ENCODE measurements at regions of chr15 and their contacts with region 1.

Region 1: DNA sequence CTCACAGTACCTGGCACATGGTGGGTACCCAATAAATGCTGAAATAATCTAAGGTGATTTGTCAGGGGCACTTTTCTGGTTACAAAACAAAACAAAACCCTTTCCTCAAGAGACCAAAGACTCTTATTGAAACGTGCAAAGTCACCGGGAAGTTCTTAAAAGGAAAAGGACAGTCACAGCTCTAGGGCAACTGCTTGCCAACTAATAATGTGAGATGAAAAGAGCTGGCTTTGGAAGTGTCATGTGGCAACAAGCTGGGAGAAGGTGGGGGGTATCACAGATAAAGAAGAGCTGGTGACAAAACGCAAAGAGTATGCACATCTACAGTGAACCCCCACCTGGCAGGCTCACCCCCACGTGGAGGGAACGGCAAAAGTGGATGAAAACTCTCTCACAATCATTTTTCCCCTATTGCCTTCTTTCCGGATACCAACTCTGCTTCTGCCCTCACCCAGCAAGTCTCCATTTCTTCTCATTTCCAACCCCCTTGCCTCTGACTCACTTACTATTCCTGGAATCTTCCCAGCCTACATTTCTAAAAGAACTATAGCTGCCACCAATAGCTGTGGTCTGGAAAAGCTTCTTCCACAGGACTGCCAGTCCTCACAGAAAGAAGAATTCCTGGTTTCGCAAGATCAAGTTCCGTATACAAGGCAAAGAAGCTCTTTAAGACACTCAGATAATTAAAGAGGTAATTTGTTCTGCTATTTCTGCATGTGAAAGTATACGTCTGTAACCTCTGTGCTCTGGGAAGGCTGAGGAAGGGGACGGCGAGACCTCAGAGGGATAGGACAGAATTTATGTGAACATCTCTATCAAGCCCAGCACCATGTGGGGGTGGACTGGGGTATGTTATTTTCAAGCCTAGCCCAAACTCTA is 21.8 kb upstream of the ANPEP start:
- DNase-seq: peak; percentile 86
- H3K4me3 ChIP-seq: peak overlapping the region; percentile 20
- H3K27ac ChIP-seq: peak overlapping the region; percentile 86
- H3K27me3 ChIP-seq: no peaks in the 10 kb centered on the region
- CTCF ChIP-seq: no peak

Region 2: DNA sequence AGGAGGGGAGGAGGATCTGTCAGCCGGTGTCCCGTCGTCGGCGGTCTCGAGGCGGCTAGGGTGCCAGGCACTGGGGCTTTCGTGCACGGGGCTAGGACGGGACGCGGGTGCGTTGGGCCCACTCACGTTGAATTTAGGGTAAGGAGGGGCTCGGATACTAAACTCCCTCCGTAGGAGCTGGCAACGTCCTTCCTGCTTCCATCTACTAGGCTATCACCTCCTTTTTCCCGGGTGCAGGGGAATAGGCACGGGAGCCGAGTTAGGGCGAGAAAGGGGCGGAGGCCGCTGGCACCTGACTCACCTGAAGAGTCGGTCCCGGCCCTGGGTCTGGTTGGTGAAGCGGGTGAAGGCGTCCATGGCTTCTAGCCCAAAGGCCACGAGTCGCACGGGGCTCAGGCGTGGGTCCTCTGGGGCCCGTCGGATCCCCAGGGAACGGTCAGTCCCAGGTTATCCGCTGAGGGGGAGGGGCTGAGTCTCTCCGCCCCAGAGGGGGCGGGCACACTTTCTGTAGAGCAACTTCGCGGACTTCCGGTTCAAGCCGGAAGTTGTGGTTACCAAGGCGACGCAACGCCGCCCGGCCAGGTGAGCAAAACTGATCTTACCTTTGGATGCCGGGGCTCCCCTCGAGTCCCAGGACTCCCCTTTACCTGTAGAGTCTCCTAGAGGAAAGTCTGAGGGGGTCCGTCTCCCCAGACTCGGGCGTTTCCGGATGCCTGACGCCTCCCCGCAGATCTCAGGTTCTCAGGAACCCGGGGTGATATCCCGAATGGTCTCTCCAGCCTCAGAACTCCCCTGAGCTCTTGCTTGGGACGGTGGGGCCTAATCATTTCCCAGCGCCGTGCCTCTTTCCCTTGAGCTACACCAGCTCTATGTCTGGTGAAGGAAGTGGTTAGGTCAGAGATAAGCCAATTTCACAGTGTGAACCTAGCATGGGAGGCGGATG is 145.9 kb before region 1 on chr15 and contains the starts of genes PEX11A and WDR93:
- in situ Hi-C with region 1: no loop called
- DNase-seq: peak; percentile 49
- H3K4me3 ChIP-seq: peak within 1 kb of the TSS; percentile 87
- H3K27ac ChIP-seq: no peak within 1 kb of the TSS
- H3K27me3 ChIP-seq: no peaks in the 10 kb centered on the region
- CTCF ChIP-seq: no peak

Region 3: GRCh38 chr15:89794627-89795241 is 41.8 kb before region 1 on chr15:
- in situ Hi-C with region 1: loop called (anchors 5 kb)
- DNase-seq: peak; percentile 48
- H3K4me3 ChIP-seq: no peak overlapping the region
- H3K27ac ChIP-seq: no peak overlapping the region
- H3K27me3 ChIP-seq: no peaks in the 10 kb centered on the region
- CTCF ChIP-seq: no peak

Measured in brain microvascular endothelial cell (primary cell).